Activated T-helper 1 cell treated with anti-CD3 and anti-CD28 coated beads, Interleukin-12 subunit alpha, Interleukin-12 subunit beta, Interleukin-2, Interleukin-4 antibody, amounts not matched to agents 30 ng/mL and 10 ng/mL and 1 ng/mL, durations not matched to agents 14 hours and 24 hours and 36 hours (primary cell): ENCODE measurements at regions of chr16 and their contacts with region 1.

Region 1: DNA sequence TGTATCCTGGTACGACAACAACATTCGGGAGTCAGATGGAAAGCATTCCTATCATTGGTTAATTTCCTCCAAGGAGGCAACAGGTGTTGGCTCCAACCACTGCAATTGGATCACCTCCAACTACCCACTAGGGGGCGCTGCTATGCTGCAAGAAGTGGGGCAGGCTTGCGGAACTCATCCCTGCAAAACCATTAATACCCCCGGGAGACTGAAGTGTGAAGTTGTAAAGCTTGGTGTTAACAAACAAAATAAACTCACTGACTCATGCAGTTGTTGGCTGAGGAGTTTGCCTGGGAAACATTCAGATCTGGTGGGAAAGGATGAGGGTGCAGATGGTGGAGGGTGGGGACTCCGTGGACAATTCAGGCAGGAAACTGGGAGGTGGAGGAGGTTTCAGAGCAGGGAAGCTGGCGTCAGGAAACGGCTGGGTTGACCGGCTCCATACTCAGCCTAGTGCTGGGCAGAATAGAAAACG is 84.9 kb downstream of the HS3ST2 start:
- DNase-seq: peak; percentile 32
- H3K4me3 Mint-ChIP-seq: no peak overlapping the region
- H3K27ac Mint-ChIP-seq: no peak overlapping the region
- H3K4me1 Mint-ChIP-seq: no peaks in the 10 kb centered on the region
- H3K27me3 Mint-ChIP-seq: peaks cover 9% of the 10 kb centered on the region

Region 2: GRCh38 chr16:22924492-22924891 is 25.6 kb after region 1 on chr16:
- intact Hi-C with region 1: no loop called
- DNase-seq: no peak
- H3K4me3 Mint-ChIP-seq: no peak overlapping the region
- H3K27ac Mint-ChIP-seq: no peak overlapping the region
- H3K4me1 Mint-ChIP-seq: no peaks in the 10 kb centered on the region
- H3K27me3 Mint-ChIP-seq: peaks cover 15% of the 10 kb centered on the region

Region 3: DNA sequence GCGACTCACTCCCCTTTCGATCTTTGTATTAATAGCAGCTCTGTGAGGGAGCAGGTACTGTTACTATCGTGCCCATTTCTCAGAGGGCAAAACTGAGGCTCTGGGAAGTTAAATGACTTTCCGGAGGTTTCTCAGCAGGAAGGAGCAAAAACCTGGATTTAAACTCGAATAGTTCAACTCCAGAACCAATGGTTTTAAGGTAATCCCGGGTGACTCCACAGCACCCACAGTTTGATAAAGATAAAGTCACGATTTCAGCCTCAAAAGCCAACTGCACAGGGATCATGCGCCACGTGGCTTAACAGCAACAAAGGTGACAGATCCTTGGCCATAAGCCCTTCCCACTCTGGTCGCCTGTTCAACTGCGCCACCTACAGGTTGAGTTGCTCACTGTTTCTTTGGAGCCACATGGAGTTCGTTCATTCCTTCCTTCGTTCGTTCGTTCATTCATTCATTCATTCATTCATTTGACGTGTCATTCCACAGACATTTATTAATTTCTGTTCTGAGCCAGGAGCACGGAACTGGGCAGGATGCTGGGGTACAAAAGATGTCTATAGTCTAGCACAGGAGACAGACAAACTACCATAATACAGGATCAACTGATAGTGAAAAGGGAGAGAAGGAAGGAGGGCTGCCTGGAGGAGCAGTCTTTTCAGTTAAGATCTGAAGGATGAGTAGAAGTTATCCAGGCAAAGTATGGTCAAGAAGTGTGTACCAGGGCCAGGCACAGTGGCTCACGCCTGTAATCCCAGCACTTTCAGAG is 49.9 kb after region 1 on chr16:
- intact Hi-C with region 1: loop called (anchors 1 kb)
- DNase-seq: peak; percentile 22
- H3K4me3 Mint-ChIP-seq: no peak overlapping the region
- H3K27ac Mint-ChIP-seq: no peak overlapping the region
- H3K4me1 Mint-ChIP-seq: peaks cover 7% of the 10 kb centered on the region
- H3K27me3 Mint-ChIP-seq: peaks cover 28% of the 10 kb centered on the region

Region 4: DNA sequence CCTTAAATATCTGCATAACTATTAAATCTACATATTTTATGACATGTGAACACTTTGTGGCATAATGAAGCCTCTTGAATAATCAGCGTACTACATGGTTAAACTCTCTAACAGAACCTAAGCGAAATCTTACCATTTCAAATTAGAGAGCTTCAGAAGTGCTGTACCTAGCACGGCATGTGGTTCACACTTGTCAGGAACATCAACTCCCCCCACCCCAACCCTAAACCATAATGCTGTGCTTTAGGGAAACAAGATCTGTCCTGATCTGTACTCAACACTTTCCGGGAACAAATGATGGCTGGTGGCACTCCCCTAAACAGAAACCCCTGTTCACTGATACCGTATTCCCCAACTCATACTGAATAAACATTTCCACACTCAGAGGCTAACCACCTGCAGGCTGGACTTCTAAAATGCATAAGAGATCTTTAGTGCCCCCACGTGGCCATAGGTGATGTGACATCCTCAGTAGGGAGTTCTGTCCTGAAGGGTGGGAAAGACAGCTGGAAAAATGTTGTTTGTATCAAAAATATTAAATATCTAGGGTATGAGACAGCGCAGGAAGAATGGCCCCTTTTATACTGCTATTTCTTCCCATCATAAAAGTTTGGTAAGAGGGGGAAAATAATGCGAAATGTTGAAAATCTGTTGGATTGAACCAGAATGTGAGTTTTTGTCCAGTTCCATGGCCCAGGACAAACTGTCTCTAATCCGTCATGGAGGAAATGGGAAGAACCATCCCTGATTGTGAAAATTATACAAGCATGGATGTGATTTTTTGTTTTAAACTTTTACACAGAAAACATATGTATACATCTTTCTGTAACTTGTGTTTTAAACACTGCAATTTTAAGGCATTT is 161.8 kb after region 1 on chr16:
- intact Hi-C with region 1: loop called (anchors 1 kb)
- DNase-seq: peak; percentile 20
- H3K4me3 Mint-ChIP-seq: no peak overlapping the region
- H3K27ac Mint-ChIP-seq: no peak overlapping the region
- H3K4me1 Mint-ChIP-seq: peaks cover 6% of the 10 kb centered on the region
- H3K27me3 Mint-ChIP-seq: peaks cover 14% of the 10 kb centered on the region